Posterior vena cava (tissue), 2 donors: ENCODE measurements at regions of chr3 and their contacts with region 1.

Region 1: DNA sequence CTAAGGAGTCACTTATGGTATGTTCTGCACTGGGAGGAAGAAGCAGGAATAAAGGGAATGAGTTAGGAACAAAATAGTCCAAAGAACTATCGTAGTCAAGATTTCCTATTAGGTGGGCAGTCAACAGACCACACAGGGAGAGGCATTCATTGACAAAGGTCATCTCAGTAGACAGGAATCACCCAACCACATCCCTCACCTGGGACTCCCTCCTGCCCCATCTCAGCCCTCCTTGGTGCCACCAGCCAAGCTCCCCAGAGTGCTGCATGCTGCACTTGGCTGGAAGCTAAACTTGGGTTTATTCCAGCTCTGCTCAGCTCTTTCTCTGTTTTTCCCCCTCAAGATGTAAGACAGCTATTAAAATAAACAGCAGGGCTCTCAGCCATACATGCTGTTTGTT is 72.3 kb upstream of the CTNNB1 start:
- DNase-seq: no peak

Region 2: GRCh38 chr3:41075975-41076374 is 51.0 kb before region 1 on chr3:
- intact Hi-C with region 1: loop called in 1 of 2 experiments (anchors 1 kb)
- DNase-seq: peak; percentile 87